Activated B cell treated with CpG ODN at 0.5 μM for 24 hours (primary cell): ENCODE measurements at regions of chr14 and their contacts with region 1.

Region 1: DNA sequence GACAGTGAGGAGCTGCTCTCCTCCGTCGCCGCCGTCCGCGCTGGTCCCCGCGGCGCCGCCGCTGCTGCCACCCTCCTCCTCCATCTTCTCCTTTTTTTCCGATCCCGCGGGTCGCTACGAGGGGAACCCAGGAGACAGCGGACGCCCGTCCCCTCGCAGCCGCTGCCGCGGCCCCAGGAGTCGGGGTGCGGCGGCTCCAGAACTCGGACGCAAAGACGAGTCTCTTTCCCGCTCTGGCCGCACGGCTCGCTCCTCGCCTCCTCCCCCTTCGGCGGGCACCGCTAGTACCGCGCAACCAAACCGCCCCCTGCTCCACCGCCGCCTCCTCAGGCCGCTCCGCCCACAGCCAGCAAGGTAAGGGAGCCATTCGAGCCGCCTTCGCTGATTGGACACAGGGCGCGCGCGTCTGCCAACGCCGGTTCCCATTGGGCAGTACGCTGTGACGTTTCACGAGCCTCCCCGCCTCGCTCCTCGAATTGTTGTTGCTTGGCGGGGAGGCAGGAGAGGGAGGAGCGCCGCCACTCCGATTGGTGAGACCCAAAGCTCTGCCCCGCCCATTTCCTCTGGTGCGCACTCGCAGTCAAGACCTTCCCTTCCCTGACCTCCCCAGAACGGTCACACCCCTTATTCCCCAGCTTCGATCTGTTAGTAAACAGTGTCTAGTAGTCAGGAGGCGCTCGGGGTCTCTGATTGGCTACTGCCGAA is at the start of gene RPS6KA5:
- DNase-seq: peak; percentile 95
- ATAC-seq: peak; percentile 82
- H3K4me3 Mint-ChIP-seq: peak within 1 kb of the TSS; percentile 87
- H3K27ac Mint-ChIP-seq: peak within 1 kb of the TSS; percentile 78
- H3K4me1 Mint-ChIP-seq: peaks cover 41% of the 10 kb centered on the region
- H3K27me3 Mint-ChIP-seq: no peaks in the 10 kb centered on the region
- CTCF ChIP-seq: no peak
- total RNA-seq, gene RPS6KA5: 13.3 and 16.3 TPM in 2 replicates

Region 2: GRCh38 chr14:90383075-90383730 is 677.3 kb before region 1 on chr14:
- CTCF ChIA-PET with region 1: no interaction called
- POLR2A ChIA-PET with region 1: no interaction called
- intact Hi-C with region 1: loop called (anchors 1 kb)
- DNase-seq: peak; percentile 94
- ATAC-seq: peak; percentile 87
- H3K4me3 Mint-ChIP-seq: no peak overlapping the region
- H3K27ac Mint-ChIP-seq: no peak overlapping the region
- H3K4me1 Mint-ChIP-seq: no peaks in the 10 kb centered on the region
- H3K27me3 Mint-ChIP-seq: no peaks in the 10 kb centered on the region
- CTCF ChIP-seq: no peak

Region 3: DNA sequence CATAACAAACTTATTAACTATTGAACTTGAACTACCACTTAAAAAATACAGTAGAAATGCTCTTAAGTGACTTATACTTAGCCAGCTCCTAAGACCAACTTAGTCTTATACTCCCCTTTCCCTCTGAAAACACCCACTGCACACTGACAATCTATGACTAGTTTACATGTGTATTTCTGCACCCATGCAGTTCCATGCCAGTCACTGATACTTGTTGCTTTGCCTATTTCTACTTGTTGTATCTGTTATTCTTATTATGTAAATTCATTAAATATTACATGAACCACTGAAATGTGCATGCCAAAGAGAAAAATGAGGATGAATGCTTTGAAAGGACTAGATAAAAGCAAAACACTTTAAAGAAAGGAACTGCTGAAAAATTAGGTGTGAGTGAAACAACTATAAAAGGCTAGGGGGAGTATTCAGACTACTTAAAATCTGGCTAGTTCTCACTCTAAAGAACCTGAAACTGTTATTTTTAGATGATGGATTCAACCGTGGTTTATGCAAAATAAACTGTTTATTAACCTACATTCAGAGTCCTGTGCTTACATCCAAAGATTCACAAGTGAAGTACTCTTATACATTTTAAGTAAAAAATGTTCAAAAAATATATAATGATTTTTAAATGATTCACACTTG is 74.8 kb before region 1 on chr14:
- CTCF ChIA-PET with region 1: interaction called, 12 read pairs
- POLR2A ChIA-PET with region 1: interaction called, 3 read pairs
- intact Hi-C with region 1: loop called (anchors 1 kb)
- DNase-seq: no peak
- ATAC-seq: peak; percentile 57
- H3K4me3 Mint-ChIP-seq: no peak overlapping the region
- H3K27ac Mint-ChIP-seq: no peak overlapping the region
- H3K4me1 Mint-ChIP-seq: peaks cover 19% of the 10 kb centered on the region
- H3K27me3 Mint-ChIP-seq: no peaks in the 10 kb centered on the region
- CTCF ChIP-seq: no peak

Region 4: GRCh38 chr14:91029456-91030217 is 30.9 kb before region 1 on chr14:
- CTCF ChIA-PET with region 1: no interaction called
- POLR2A ChIA-PET with region 1: interaction called, 10 read pairs
- intact Hi-C with region 1: no loop called
- DNase-seq: no peak
- ATAC-seq: no peak
- H3K4me3 Mint-ChIP-seq: no peak overlapping the region
- H3K27ac Mint-ChIP-seq: no peak overlapping the region
- H3K4me1 Mint-ChIP-seq: peaks cover 54% of the 10 kb centered on the region
- H3K27me3 Mint-ChIP-seq: no peaks in the 10 kb centered on the region
- CTCF ChIP-seq: no peak

Region 5: GRCh38 chr14:91138511-91139359 is 78.2 kb after region 1 on chr14:
- CTCF ChIA-PET with region 1: interaction called, 3 read pairs
- POLR2A ChIA-PET with region 1: interaction called, 5 read pairs
- intact Hi-C with region 1: loop called (anchors 1 kb)
- DNase-seq: no peak
- ATAC-seq: peak; percentile 29
- H3K4me3 Mint-ChIP-seq: no peak overlapping the region
- H3K27ac Mint-ChIP-seq: peak overlapping the region; percentile 69
- H3K4me1 Mint-ChIP-seq: peaks cover 32% of the 10 kb centered on the region
- H3K27me3 Mint-ChIP-seq: no peaks in the 10 kb centered on the region
- CTCF ChIP-seq: no peak

Region 6: GRCh38 chr14:91317381-91318308 is 257.1 kb after region 1 on chr14:
- CTCF ChIA-PET with region 1: no interaction called
- POLR2A ChIA-PET with region 1: no interaction called
- intact Hi-C with region 1: loop called (anchors 2 kb)
- DNase-seq: peak; percentile 62
- ATAC-seq: peak; percentile 32
- H3K4me3 Mint-ChIP-seq: peak overlapping the region; percentile 70
- H3K27ac Mint-ChIP-seq: peak overlapping the region; percentile 98
- H3K4me1 Mint-ChIP-seq: peaks cover 78% of the 10 kb centered on the region
- H3K27me3 Mint-ChIP-seq: no peaks in the 10 kb centered on the region
- CTCF ChIP-seq: no peak